PC-9 (cell line): ENCODE measurements at regions of chr3 and their contacts with region 1.

Region 1: GRCh38 chr3:126752303-126752842 is 48.3 kb downstream of the CHCHD6 start:
- DNase-seq: peak; percentile 44 to 88
- H3K4me3 ChIP-seq: no peak overlapping the region
- H3K27ac ChIP-seq: no peak overlapping the region
- H3K4me1 ChIP-seq: peaks cover 10% of the 10 kb centered on the region
- H3K27me3 ChIP-seq: no peaks in the 10 kb centered on the region
- CTCF ChIP-seq: peak; percentile 93

Region 2: DNA sequence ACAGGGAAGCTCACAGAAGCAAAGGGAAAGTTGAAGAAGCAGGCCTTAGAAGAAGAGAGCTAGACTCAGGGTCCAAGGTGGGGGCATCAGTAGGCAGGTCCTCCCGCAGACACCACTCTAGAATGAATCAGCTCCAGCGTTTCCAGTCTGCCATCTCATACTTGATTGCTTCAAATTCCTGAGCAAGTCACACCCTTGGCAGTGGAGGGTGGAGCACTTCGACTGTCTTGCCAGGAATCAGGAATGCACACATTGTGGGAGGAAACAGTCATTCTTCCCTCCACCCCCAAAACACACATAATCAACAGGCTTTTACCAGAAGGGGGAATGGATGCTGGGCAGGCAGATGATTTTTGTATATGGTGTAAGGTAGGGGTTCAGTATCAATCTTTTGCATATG is 30.2 kb after region 1 on chr3:
- CTCF ChIA-PET with region 1: interaction called, 3 read pairs
- POLR2A ChIA-PET with region 1: no interaction called
- intact Hi-C with region 1: loop called (anchors 1 kb)
- DNase-seq: peak; percentile 86 to 90
- H3K4me3 ChIP-seq: no peak overlapping the region
- H3K27ac ChIP-seq: peak overlapping the region; percentile 88
- H3K4me1 ChIP-seq: peaks cover 27% of the 10 kb centered on the region
- H3K27me3 ChIP-seq: no peaks in the 10 kb centered on the region
- CTCF ChIP-seq: no peak

Region 3: GRCh38 chr3:126911162-126912026 is 159.0 kb after region 1 on chr3:
- CTCF ChIA-PET with region 1: interaction called, 11 read pairs
- POLR2A ChIA-PET with region 1: interaction called, 3 read pairs
- intact Hi-C with region 1: loop called (anchors 1 kb)
- DNase-seq: peak; percentile 90 to 97
- H3K4me3 ChIP-seq: no peak overlapping the region
- H3K27ac ChIP-seq: peak overlapping the region; percentile 96
- H3K4me1 ChIP-seq: peaks cover 84% of the 10 kb centered on the region
- H3K27me3 ChIP-seq: no peaks in the 10 kb centered on the region
- CTCF ChIP-seq: no peak

Region 4: GRCh38 chr3:127074728-127075360 is 322.5 kb after region 1 on chr3:
- CTCF ChIA-PET with region 1: no interaction called
- POLR2A ChIA-PET with region 1: no interaction called
- intact Hi-C with region 1: loop called (anchors 1 kb)
- DNase-seq: peak; percentile 51 to 59
- H3K4me3 ChIP-seq: no peak overlapping the region
- H3K27ac ChIP-seq: peak overlapping the region; percentile 46; the same call in 1 of the 2 replicates
- H3K4me1 ChIP-seq: peaks cover 34% of the 10 kb centered on the region
- H3K27me3 ChIP-seq: 0 out of 2 replicates have a peak, but pooled peaks cover 3% of the 10 kb centered on the region
- CTCF ChIP-seq: no peak

Region 5: GRCh38 chr3:127473244-127474024 is 721.1 kb after region 1 on chr3:
- CTCF ChIA-PET with region 1: no interaction called
- POLR2A ChIA-PET with region 1: interaction called, 3 read pairs
- intact Hi-C with region 1: loop called (anchors 1 kb)
- DNase-seq: peak in 1 of 2 experiments; percentile 58
- H3K4me3 ChIP-seq: no peak overlapping the region
- H3K27ac ChIP-seq: no peak overlapping the region
- H3K4me1 ChIP-seq: no peaks in the 10 kb centered on the region
- H3K27me3 ChIP-seq: peaks cover 43% of the 10 kb centered on the region
- CTCF ChIP-seq: peak; percentile 58